ENCODE measurements at regions of chr16 and their contacts with region 1.

Region 1: DNA sequence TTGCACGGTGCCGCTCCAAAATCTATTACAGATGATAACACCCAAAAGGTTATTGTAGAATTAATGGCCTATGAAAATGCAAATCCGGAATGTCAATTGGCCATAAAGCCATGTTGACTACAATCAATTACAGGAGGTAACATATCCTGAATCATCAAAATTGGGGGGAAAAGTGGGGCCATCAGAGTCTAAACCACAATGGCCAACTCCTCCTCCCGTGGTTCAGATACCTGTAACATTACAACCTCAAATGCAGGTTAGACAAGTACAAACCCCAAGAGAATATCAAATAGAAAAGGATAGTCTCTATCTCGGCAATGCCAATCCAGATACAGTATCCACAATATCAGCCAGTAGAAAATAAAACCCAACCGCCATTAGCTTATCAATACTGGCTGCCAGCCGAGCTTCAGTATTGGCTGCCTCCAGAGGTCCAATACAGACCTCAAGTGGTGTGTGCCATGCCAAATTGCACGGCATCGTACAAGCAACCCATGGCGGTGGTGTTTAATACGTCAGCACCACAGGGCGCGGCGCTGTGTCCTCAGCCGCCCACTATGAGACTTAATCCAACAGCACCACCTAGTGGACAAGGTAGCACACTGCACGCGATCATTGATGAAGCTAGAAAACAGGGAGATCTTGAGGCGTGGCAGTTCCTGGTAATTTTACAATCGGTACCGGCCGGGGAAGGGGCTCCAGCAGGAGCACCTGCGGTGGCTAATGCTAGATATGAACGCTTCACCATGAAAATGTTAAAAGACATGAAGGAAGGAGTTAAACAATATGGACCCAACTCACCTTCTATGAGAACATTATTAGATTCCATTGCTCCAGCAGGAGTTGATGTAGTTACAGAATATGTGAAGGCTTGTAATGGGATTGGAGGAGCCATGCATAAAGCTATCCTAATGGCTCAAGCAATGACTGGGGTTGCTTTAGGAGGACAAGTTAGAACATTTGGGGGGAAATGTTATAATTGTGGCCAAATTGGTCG is 15.2 kb downstream of the FLYWCH1 start:
- DNase-seq: peak; percentile 92
- H3K4me3 Mint-ChIP-seq: no peak overlapping the region
- H3K27ac Mint-ChIP-seq: no peak overlapping the region
- H3K4me1 Mint-ChIP-seq: peaks cover 12% of the 10 kb centered on the region
- H3K27me3 Mint-ChIP-seq: no peaks in the 10 kb centered on the region

Region 2: GRCh38 chr16:2838928-2839327 is 88.0 kb before region 1 on chr16:
- CTCF ChIA-PET with region 1: interaction called, 13 read pairs
- POLR2A ChIA-PET with region 1: no interaction called
- intact Hi-C with region 1: loop called (anchors 2 kb)
- DNase-seq: peak; percentile 72
- H3K4me3 Mint-ChIP-seq: no peak overlapping the region
- H3K27ac Mint-ChIP-seq: no peak overlapping the region
- H3K4me1 Mint-ChIP-seq: peaks cover 35% of the 10 kb centered on the region
- H3K27me3 Mint-ChIP-seq: peaks cover 1% of the 10 kb centered on the region

Region 3: GRCh38 chr16:2874912-2875362 is 52.0 kb before region 1 on chr16:
- CTCF ChIA-PET with region 1: interaction called, 11 read pairs
- POLR2A ChIA-PET with region 1: no interaction called
- intact Hi-C with region 1: no loop called
- DNase-seq: peak; percentile 80
- H3K4me3 Mint-ChIP-seq: no peak overlapping the region
- H3K27ac Mint-ChIP-seq: no peak overlapping the region
- H3K4me1 Mint-ChIP-seq: no peaks in the 10 kb centered on the region
- H3K27me3 Mint-ChIP-seq: no peaks in the 10 kb centered on the region

Region 4: DNA sequence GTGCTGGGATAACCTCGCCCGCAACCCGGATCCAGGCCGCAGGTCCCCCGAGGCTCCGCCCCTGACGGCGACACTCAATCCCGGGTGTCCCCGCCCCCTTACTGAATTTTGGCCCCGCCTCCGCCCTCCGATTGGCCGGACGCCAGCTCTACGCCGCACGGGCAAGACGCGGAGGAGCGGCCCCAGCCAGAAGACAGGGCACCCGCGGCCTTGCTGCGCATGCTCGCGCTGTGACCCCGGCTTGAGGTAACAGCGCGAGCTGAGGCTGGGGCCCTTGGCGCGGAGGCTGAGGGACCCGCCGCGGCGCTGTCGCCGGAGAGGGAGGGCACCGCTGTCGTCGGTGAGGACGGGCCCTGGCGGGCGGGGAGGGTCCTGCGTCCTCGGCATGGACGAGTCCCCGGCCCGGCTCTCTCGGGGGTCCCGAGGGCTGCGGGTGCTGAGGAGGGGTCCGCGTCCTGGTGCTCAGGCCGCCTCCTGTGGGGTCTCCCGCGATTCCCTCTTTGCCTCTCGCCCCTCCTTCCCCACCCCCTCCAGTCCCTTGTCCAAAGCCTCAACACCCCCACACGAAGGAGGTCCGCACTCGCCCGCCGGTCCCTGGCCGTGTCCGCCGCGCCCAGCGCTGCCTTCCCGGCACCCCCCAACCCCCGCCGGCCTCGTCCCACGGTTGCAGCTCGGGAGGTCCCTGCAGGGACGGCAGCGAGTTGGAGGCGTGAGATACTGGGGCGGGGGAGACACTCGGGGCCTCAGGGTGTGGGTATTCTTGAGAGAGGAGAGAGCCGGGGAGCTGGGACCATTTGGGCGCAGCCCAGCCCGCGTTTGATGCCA is 43.7 kb before region 1 on chr16 and contains the start of gene FLYWCH2:
- CTCF ChIA-PET with region 1: interaction called, 13 read pairs
- POLR2A ChIA-PET with region 1: no interaction called
- intact Hi-C with region 1: no loop called
- DNase-seq: peak; percentile 100
- H3K4me3 Mint-ChIP-seq: peak within 1 kb of the TSS; percentile 90
- H3K27ac Mint-ChIP-seq: peak within 1 kb of the TSS; percentile 97
- H3K4me1 Mint-ChIP-seq: peaks cover 11% of the 10 kb centered on the region
- H3K27me3 Mint-ChIP-seq: no peaks in the 10 kb centered on the region
- total RNA-seq, gene FLYWCH2: 19.1 to 19.4 TPM

Region 5: DNA sequence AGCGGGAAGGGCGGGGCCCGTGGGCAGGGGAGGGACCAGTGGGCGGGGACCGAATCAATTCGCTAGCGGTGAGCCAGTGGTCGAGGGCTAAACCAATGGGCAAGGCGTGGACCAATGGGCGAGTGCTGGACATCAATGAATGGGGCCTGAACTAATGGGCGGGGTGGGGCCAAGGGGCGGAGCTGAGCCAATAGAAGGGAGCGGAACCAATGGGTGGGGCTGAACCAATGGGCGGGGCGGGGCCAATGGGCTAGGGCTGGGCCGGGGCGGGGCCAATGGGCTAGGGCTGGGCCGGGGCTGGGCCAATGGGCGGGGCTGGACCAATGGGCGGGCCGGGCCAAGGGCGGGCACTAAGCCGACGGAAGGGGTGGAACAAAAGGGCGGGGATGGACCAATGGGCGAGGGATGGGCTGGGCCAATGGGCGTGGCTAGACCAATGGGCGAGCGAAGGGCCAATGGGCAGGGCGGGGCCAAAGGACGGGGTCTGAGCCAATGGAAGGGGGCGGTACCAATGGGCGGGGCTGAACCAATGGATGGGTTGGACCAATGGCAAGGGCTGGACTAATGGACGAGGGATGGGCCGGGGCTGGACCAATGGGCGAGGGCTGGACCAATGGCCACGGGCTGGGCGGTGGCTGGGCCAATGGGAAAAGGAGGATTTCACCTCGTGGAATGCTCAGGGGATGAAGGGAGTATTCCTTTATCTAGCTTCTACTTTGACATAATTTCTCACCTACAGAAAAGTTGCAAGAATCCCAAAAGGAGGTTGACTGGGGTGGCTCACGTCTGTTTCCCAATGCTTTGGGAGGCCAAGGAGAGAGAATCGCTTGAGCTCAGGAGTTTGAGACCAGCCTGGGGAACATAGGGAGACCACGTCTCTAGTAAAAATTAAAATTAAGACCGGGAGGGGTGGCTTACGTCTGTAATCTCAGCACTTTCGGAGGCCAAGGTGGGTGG is 21.2 kb before region 1 on chr16:
- CTCF ChIA-PET with region 1: interaction called, 14 read pairs
- POLR2A ChIA-PET with region 1: no interaction called
- intact Hi-C with region 1: loop called (anchors 1 kb)
- DNase-seq: peak; percentile 99
- H3K4me3 Mint-ChIP-seq: peak overlapping the region; percentile 97
- H3K27ac Mint-ChIP-seq: peak overlapping the region; percentile 51
- H3K4me1 Mint-ChIP-seq: peaks cover 16% of the 10 kb centered on the region
- H3K27me3 Mint-ChIP-seq: no peaks in the 10 kb centered on the region

Region 6: DNA sequence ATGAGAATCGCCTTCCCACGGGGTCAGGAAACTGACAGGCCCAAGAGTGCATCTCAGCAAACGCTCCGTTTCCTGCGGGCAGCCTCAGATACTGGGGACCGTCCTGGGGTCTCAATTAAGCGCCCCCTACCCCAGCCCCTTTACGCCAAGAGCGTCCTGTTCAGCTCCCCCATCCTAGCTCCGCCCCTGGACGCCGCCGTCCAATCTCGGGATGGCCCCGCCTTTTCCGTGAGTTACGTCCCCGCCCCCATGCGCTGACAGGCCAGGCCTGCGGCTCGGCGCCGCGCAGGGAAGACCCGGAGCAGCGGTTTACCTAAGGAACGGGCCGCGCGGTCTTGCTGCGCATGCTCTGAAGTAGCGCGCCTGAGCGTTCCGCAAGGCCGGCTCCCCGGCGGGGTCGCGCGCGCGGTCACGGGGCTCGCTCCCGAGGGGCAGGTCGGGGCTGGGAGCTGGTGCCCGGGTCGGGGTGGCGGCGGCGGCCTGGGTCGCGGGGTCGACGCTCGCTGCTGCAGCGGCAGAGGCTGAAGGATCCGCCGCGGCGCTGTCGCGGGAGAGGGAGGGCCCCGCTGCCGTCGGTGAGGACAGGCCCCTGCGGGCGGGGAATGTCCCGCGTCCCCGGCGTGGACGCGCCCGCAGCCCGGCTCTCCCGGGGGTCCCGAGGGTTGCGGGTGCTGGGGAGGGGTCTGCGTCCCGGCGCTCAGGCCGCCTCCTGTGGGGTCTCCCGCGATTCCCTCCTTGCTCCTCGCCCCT is 15.2 kb before region 1 on chr16 and contains the start of gene FLYWCH1:
- CTCF ChIA-PET with region 1: interaction called, 20 read pairs
- POLR2A ChIA-PET with region 1: interaction called, 3 read pairs
- intact Hi-C with region 1: no loop called
- DNase-seq: peak; percentile 99
- H3K4me3 Mint-ChIP-seq: peak within 1 kb of the TSS; percentile 87
- H3K27ac Mint-ChIP-seq: peak within 1 kb of the TSS; percentile 80
- H3K4me1 Mint-ChIP-seq: peaks cover 38% of the 10 kb centered on the region
- H3K27me3 Mint-ChIP-seq: no peaks in the 10 kb centered on the region
- total RNA-seq, gene FLYWCH1: 49.2 to 52.2 TPM

Region 7: GRCh38 chr16:2942045-2942444 is 15.1 kb after region 1 on chr16:
- CTCF ChIA-PET with region 1: interaction called, 21 read pairs
- POLR2A ChIA-PET with region 1: no interaction called
- intact Hi-C with region 1: no loop called
- DNase-seq: no peak
- H3K4me3 Mint-ChIP-seq: no peak overlapping the region
- H3K27ac Mint-ChIP-seq: no peak overlapping the region
- H3K4me1 Mint-ChIP-seq: no peaks in the 10 kb centered on the region
- H3K27me3 Mint-ChIP-seq: no peaks in the 10 kb centered on the region

Measured in activated CD4-positive, alpha-beta memory T cell treated with anti-CD3 and anti-CD28 coated beads for 36 hours (primary cell).